ENCODE measurements at regions of chr2 and their contacts with region 1.

Region 1: GRCh38 chr2:69724540-69725159 is 17.3 kb upstream of the ANXA4 start:
- DNase-seq: peak; percentile 90
- ATAC-seq: peak; percentile 95
- H3K4me3 Mint-ChIP-seq: peak overlapping the region; percentile 69
- H3K27ac Mint-ChIP-seq: no peak overlapping the region
- H3K4me1 Mint-ChIP-seq: peaks cover 8% of the 10 kb centered on the region
- H3K27me3 Mint-ChIP-seq: peaks cover 3% of the 10 kb centered on the region

Region 2: DNA sequence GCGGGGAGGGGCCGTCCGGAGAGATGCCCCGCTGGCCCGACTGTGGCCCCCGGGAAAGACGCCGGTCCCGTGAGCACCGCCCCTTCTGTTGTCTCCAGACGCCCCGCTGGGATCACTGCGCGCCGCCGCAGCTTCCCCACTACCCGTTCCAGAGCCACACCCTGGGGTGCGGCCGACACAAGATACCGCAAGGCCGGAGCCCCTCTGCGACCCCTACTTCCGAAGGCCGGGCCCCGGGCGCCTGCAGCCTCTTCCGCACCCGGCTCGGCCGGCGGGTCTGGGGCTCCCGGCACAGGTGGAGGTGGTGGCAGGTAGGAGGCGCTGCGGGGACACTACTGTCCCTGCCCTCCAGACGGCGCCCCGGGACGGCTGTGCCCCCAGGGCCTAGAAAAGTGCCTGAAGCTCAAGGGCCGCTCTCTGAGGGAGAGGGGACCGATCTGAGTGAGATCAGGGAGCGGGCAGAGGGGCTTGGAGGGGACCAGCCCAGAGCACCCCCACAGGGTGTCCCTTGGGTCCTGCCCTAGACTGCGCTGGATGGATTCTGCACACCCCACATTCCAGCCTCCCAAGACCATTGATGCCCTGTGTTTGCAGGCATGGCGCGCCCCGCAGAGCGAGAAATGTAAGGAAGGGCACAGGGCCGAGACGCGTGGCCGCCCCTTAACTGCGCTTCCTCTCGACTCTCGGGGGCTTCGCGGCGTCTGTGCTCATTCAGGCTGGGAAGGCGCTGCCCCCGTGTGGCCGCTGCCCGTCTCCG is 417.6 kb before region 1 on chr2:
- CTCF ChIA-PET with region 1: no interaction called
- DNase-seq: peak; percentile 82
- ATAC-seq: peak; percentile 95
- H3K4me3 Mint-ChIP-seq: peak overlapping the region; percentile 56
- H3K27ac Mint-ChIP-seq: no peak overlapping the region
- H3K4me1 Mint-ChIP-seq: peaks cover 11% of the 10 kb centered on the region
- H3K27me3 Mint-ChIP-seq: peaks cover 54% of the 10 kb centered on the region

Region 3: DNA sequence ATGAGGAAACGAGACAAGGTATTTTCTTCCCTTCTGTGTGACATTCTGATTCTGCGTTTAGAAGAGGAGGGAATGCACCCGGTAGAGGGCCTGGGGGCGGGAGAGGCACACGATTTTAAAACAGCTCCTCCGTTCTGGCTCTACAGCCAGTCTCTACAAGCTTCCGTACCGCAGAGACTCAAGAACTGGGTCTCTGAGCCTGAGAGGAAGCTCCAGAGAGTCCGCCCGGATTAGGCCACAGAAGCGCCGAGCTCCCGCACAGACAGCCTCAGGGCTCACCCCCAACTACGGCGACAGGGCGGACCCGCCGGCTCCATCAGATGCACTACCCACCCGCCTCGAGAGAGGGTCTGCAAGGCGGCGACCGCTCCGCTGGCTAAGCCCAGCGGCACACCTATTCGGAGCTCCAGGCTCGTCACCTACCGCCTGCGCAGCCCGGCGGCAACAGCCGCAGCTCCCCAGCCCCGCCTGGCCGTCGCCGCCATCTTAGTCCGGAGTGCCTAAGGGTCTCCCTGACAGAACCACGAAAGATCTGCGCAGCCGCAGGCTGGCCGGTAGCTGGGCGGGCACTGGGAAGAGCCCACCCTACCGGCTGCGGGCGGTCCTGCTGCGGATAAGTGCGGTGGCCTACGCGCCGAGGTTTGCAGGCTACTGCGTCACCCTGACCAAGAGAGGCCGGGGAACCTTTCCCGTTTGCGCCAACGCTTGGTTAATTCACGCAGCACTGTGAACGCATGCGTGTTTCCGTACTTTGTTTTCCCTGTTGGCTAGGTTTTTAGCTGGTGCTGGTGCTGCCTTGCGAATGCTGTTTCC is 287.5 kb before region 1 on chr2 and contains the start of gene NFU1:
- CTCF ChIA-PET with region 1: interaction called, 13 read pairs
- DNase-seq: peak; percentile 93
- ATAC-seq: peak; percentile 95
- H3K4me3 Mint-ChIP-seq: peak within 1 kb of the TSS; percentile 95
- H3K27ac Mint-ChIP-seq: peak within 1 kb of the TSS; percentile 91
- H3K4me1 Mint-ChIP-seq: peaks cover 24% of the 10 kb centered on the region
- H3K27me3 Mint-ChIP-seq: no peaks in the 10 kb centered on the region
- total RNA-seq, gene NFU1: 28.5 to 40.9 TPM

Region 4: GRCh38 chr2:69604026-69604678 is 120.5 kb before region 1 on chr2:
- CTCF ChIA-PET with region 1: no interaction called
- DNase-seq: no peak
- ATAC-seq: no peak
- H3K4me3 Mint-ChIP-seq: no peak overlapping the region
- H3K27ac Mint-ChIP-seq: no peak overlapping the region
- H3K4me1 Mint-ChIP-seq: peaks cover 62% of the 10 kb centered on the region
- H3K27me3 Mint-ChIP-seq: no peaks in the 10 kb centered on the region

Region 5: GRCh38 chr2:69741619-69742466 is 17.2 kb after region 1 on chr2 and contains the start of gene ANXA4:
- CTCF ChIA-PET with region 1: interaction called, 38 read pairs
- DNase-seq: peak; percentile 81
- ATAC-seq: peak; percentile 94
- H3K4me3 Mint-ChIP-seq: peak within 1 kb of the TSS; percentile 87
- H3K27ac Mint-ChIP-seq: peak within 1 kb of the TSS; percentile 85
- H3K4me1 Mint-ChIP-seq: peaks cover 19% of the 10 kb centered on the region
- H3K27me3 Mint-ChIP-seq: no peaks in the 10 kb centered on the region
- total RNA-seq, gene ANXA4: 56.1 to 66.6 TPM

Region 6: GRCh38 chr2:69804416-69804815 is 79.8 kb after region 1 on chr2:
- CTCF ChIA-PET with region 1: interaction called, 248 read pairs
- DNase-seq: no peak
- ATAC-seq: no peak
- H3K4me3 Mint-ChIP-seq: no peak overlapping the region
- H3K27ac Mint-ChIP-seq: peak overlapping the region; percentile 25
- H3K4me1 Mint-ChIP-seq: peaks cover 13% of the 10 kb centered on the region
- H3K27me3 Mint-ChIP-seq: no peaks in the 10 kb centered on the region

Region 7: GRCh38 chr2:69829256-69830046 is 104.8 kb after region 1 on chr2 and contains the start of gene GMCL1:
- CTCF ChIA-PET with region 1: interaction called, 26 read pairs
- DNase-seq: peak; percentile 99
- ATAC-seq: peak; percentile 93
- H3K4me3 Mint-ChIP-seq: peak within 1 kb of the TSS; percentile 88
- H3K27ac Mint-ChIP-seq: peak within 1 kb of the TSS; percentile 95
- H3K4me1 Mint-ChIP-seq: peaks cover 55% of the 10 kb centered on the region
- H3K27me3 Mint-ChIP-seq: no peaks in the 10 kb centered on the region
- total RNA-seq, gene GMCL1: 26.5 to 32.6 TPM

Region 8: DNA sequence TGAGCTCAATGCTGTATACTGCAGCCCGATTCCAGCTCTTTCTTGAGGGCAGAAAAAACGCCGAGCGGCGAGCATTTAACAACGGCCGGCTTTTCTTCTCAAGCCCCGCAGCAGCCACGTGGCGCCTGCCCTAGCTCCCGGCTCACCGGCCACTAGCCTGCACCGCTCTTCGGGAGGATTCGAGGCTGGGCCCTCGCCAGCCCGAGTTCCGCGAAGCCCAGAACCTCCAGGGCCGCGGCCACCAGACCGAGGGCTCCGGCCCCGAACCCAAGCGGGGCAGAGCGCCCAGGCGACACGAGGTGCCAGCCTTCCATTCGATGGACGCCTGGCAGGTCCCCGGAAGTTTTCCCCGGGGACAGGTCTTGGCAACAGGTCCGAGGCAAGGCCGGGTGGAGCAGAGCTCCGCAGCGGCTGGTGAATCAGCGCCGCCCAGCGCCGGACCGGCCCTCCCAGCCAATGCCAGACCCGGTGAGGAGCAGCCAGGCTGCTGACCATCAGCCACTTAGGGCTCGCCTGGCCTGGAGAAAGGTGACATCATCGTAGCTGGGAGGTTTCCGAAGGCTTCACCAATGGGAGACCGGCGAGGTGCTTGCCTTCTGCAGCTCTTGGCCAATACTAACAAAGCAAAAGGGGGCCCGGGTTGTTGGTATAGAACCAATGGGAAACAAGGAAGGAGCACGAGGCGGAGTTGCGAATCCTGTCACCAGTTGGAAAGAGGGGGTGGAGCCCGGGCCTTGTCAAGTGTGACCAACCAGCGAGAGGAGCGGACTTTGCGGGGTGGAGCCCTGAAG is 189.7 kb after region 1 on chr2:
- CTCF ChIA-PET with region 1: interaction called, 15 read pairs
- DNase-seq: peak; percentile 100
- ATAC-seq: peak; percentile 91
- H3K4me3 Mint-ChIP-seq: peak overlapping the region; percentile 78
- H3K27ac Mint-ChIP-seq: peak overlapping the region; percentile 86
- H3K4me1 Mint-ChIP-seq: peaks cover 38% of the 10 kb centered on the region
- H3K27me3 Mint-ChIP-seq: no peaks in the 10 kb centered on the region